RWPE1 (cell line): ENCODE measurements at regions of chr5 and their contacts with region 1.

Region 1: DNA sequence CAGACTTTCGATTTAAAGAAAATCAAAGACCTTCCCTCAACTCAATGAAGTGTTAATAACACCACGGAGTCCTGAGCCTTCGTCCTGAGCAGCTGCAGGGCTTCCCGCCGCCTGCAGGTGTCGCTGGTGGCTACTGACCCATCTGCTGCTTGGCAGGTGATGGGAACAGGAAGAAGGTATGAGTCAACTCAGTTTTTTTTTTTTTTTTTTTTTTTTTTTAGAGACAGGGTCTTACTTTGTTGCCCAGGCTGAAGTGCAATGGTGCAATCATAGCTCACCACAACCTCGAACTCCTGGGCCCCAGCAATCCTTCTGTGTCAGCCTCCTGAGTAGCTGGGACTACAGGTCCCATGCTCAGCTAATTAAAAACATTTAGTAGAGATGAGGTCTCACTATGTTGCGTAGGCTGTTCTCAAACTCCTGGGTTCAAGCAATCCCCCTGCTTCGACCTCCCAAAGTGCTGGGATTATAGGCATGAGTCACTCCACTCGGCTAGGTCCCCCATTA is 185.7 kb upstream of the IL12B start:
- DNase-seq: peak; percentile 80
- H3K27ac ChIP-seq: no peak overlapping the region
- CTCF ChIP-seq: peak; percentile 81

Region 2: DNA sequence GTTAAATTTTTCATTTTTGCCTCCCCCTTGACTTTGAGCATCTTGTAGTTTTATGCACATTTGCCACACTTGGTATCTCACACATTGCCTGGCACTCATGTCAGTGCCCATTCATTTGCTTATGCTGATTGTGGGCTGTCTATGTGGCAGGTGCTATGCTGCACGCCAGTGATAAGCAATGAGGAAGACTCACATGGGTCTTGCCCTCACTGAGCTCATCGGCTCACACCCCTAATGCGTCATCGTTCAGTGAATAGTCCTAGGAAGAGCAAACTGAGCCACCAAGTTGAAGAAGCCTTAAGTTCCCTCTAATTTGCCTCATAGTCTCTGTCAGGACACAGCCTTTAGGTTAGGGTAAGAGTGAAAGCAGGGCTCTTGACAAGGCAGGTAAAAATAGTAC is 23.7 kb after region 1 on chr5:
- CTCF ChIA-PET with region 1: no interaction called
- POLR2A ChIA-PET with region 1: no interaction called
- DNase-seq: no peak
- H3K27ac ChIP-seq: no peak overlapping the region
- CTCF ChIP-seq: no peak

Region 3: DNA sequence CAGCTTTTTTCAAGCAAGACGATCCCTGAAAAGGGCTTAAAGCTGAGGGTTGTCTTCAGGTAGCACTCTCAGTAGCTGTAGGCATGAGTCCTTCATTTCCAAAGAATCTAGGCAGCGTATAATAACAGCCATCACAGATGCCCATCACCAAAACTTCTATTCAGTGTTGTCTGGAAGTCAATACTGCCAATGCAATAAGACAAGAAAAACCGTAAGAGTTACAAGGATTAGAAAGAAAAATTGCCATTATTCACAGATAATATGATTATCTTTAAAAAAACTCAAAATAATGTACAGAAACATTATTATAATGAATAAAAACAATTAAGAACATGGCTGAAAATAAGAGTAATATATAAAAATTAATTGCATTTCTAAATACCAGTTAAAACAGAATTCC is 192.1 kb after region 1 on chr5:
- CTCF ChIA-PET with region 1: interaction called, 11 read pairs
- POLR2A ChIA-PET with region 1: no interaction called
- DNase-seq: no peak
- H3K27ac ChIP-seq: no peak overlapping the region
- CTCF ChIP-seq: no peak

Region 4: GRCh38 chr5:159887050-159887449 is 371.1 kb after region 1 on chr5:
- CTCF ChIA-PET with region 1: no interaction called
- POLR2A ChIA-PET with region 1: interaction called, 10 read pairs
- DNase-seq: no peak
- H3K27ac ChIP-seq: no peak overlapping the region
- CTCF ChIP-seq: no peak

Region 5: GRCh38 chr5:159915904-159916840 is 400.2 kb after region 1 on chr5 and contains the start of gene ADRA1B:
- CTCF ChIA-PET with region 1: interaction called, 21 read pairs
- POLR2A ChIA-PET with region 1: no interaction called
- DNase-seq: peak; percentile 87
- H3K27ac ChIP-seq: no peak within 1 kb of the TSS
- CTCF ChIP-seq: peak; percentile 71

Region 6: DNA sequence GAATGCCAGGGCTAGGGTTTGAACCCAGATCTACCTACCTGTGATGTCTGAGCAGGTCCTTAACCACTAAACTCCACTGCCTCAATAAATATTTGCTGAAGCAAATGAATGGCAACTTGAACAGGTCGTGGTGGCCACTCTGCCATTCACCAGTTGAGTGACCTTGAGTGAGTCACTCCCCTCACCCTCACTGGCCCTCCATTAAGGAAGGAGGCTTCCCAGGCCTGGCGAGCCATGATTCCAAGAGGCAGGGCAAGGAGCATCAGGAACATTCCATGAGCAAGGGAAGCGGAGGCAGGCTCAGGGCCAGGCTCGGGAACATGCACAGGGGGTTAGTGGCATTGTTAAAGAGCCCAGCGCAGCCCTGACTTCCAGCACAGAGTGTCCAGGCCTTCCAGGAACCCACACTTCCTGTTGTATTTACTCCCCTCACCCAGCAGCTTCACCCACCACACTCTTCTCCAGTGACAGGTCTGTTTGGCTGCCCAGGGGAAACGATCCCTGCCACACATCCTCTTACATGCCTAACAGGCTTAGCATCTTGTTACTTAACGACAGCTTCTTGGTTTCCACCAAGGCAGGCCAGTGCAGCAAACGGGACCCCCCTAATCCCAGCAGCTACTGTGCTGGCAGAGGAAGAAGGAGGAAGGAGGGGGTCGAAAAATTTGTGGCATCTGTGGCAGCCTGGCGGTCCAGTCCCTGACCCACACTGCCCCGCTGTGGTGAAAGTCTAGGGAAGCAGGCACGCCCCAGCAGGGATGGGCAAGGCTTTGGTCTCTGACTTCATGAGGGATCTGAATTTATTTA is 449.3 kb after region 1 on chr5:
- CTCF ChIA-PET with region 1: interaction called, 11 read pairs
- POLR2A ChIA-PET with region 1: no interaction called
- DNase-seq: peak; percentile 75
- H3K27ac ChIP-seq: no peak overlapping the region
- CTCF ChIP-seq: peak; percentile 63